ENCODE measurements at regions of chr18 and their contacts with region 1.

Region 1: DNA sequence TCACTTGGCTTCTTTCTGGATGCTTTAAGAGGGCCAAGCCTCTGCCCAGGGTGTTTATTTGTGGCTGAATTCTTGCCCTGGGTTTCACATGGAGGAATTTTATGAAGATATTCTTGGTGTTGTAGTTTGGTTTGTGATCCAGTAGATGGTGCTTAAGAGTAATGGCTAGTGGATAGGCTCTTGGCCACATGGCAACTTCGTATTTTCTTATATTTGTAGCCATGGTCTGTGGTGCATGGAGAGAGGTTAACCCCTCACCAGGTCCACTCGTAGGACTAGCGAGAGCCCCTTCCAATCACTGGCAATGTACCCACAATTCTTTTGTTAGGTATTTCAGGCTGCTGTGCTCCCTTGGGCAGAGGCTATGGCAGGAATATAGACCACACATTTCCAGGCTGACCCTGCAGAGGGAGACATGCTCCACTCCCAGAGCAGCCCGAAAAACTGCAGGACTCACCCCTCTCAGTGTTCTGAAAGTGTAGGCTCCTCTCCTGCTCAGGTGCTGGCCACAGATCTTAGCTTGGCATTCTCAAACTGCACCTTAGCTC is 582.1 kb upstream of the SETBP1 start:
- DNase-seq: peak; percentile 49
- H3K4me3 Mint-ChIP-seq: no peak overlapping the region
- H3K27ac Mint-ChIP-seq: no peak overlapping the region
- H3K4me1 Mint-ChIP-seq: no peaks in the 10 kb centered on the region
- H3K27me3 Mint-ChIP-seq: no peaks in the 10 kb centered on the region
- CTCF ChIP-seq: peak; percentile 41

Region 2: DNA sequence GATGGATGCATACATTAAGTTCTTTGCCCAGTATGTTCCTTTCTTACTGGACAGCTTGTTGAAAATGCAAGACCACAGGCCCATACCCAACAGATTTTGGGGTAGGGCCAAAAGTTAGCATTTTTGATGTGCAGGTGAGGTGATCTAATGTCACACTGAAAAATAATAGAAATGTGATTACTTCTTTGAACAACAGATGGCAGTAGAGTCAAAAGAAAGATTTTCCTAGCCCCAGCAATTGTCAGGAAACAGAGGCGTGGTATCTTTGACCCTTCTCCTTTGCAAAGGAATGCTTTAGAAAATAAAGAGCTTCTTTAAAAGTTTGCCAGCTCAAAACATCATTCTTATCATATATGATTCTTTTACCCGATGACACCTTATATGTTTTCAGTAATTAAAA is 477.7 kb before region 1 on chr18:
- CTCF ChIA-PET with region 1: no interaction called
- POLR2A ChIA-PET with region 1: no interaction called
- intact Hi-C with region 1: loop called (anchors 5 kb)
- DNase-seq: peak; percentile 54
- H3K4me3 Mint-ChIP-seq: no peak overlapping the region
- H3K27ac Mint-ChIP-seq: no peak overlapping the region
- H3K4me1 Mint-ChIP-seq: no peaks in the 10 kb centered on the region
- H3K27me3 Mint-ChIP-seq: peaks cover 34% of the 10 kb centered on the region
- CTCF ChIP-seq: peak; percentile 47

Region 3: GRCh38 chr18:43789234-43790000 is 309.2 kb before region 1 on chr18:
- CTCF ChIA-PET with region 1: interaction called, 3 read pairs
- POLR2A ChIA-PET with region 1: no interaction called
- intact Hi-C with region 1: loop called (anchors 1 kb)
- DNase-seq: peak; percentile 19
- H3K4me3 Mint-ChIP-seq: no peak overlapping the region
- H3K27ac Mint-ChIP-seq: no peak overlapping the region
- H3K4me1 Mint-ChIP-seq: peaks cover 13% of the 10 kb centered on the region
- H3K27me3 Mint-ChIP-seq: no peaks in the 10 kb centered on the region
- CTCF ChIP-seq: no peak

Region 4: DNA sequence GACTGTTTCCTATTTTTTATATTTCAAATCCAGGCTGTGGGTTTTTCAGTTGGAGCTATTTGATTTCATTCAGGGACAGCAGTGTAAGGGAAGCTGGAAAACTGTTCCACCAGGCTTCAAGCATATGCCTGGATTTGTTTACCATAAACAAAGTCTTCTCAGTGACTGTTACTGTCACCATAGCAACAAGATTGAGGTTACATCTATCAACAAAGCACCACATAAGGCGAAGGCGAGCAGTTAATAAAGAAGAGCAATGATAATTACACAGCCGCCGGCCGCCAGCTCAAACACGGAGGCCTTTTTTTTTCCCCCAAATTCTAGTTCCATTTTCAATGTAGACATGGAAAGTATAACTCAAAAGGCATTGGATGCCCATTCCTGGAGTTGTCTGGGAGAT is 267.7 kb before region 1 on chr18:
- CTCF ChIA-PET with region 1: no interaction called
- POLR2A ChIA-PET with region 1: no interaction called
- intact Hi-C with region 1: no loop called
- DNase-seq: no peak
- H3K4me3 Mint-ChIP-seq: no peak overlapping the region
- H3K27ac Mint-ChIP-seq: no peak overlapping the region
- H3K4me1 Mint-ChIP-seq: no peaks in the 10 kb centered on the region
- H3K27me3 Mint-ChIP-seq: no peaks in the 10 kb centered on the region
- CTCF ChIP-seq: no peak

Region 5: GRCh38 chr18:43863180-43863579 is 235.4 kb before region 1 on chr18:
- CTCF ChIA-PET with region 1: no interaction called
- POLR2A ChIA-PET with region 1: no interaction called
- intact Hi-C with region 1: no loop called
- DNase-seq: no peak
- H3K4me3 Mint-ChIP-seq: no peak overlapping the region
- H3K27ac Mint-ChIP-seq: no peak overlapping the region
- H3K4me1 Mint-ChIP-seq: no peaks in the 10 kb centered on the region
- H3K27me3 Mint-ChIP-seq: no peaks in the 10 kb centered on the region
- CTCF ChIP-seq: no peak

Region 6: GRCh38 chr18:44067186-44067585 is 31.4 kb before region 1 on chr18:
- CTCF ChIA-PET with region 1: no interaction called
- POLR2A ChIA-PET with region 1: no interaction called
- intact Hi-C with region 1: no loop called
- DNase-seq: no peak
- H3K4me3 Mint-ChIP-seq: no peak overlapping the region
- H3K27ac Mint-ChIP-seq: no peak overlapping the region
- H3K4me1 Mint-ChIP-seq: no peaks in the 10 kb centered on the region
- H3K27me3 Mint-ChIP-seq: peaks cover 20% of the 10 kb centered on the region
- CTCF ChIP-seq: no peak

Region 7: GRCh38 chr18:44143072-44143471 is 44.4 kb after region 1 on chr18:
- CTCF ChIA-PET with region 1: no interaction called
- POLR2A ChIA-PET with region 1: no interaction called
- intact Hi-C with region 1: no loop called
- DNase-seq: no peak
- H3K4me3 Mint-ChIP-seq: no peak overlapping the region
- H3K27ac Mint-ChIP-seq: no peak overlapping the region
- H3K4me1 Mint-ChIP-seq: no peaks in the 10 kb centered on the region
- H3K27me3 Mint-ChIP-seq: no peaks in the 10 kb centered on the region
- CTCF ChIP-seq: no peak

Region 8: GRCh38 chr18:44325903-44326635 is 227.4 kb after region 1 on chr18:
- CTCF ChIA-PET with region 1: no interaction called
- POLR2A ChIA-PET with region 1: no interaction called
- intact Hi-C with region 1: loop called (anchors 1 kb)
- DNase-seq: peak; percentile 78
- H3K4me3 Mint-ChIP-seq: no peak overlapping the region
- H3K27ac Mint-ChIP-seq: no peak overlapping the region
- H3K4me1 Mint-ChIP-seq: no peaks in the 10 kb centered on the region
- H3K27me3 Mint-ChIP-seq: no peaks in the 10 kb centered on the region
- CTCF ChIP-seq: peak; percentile 54